ENCODE measurements at regions of chr5 and their contacts with region 1.

Region 1: GRCh38 chr5:143182901-143183820 is 220.3 kb downstream of the NR3C1 start:
- DNase-seq: peak; percentile 84
- ATAC-seq: peak; percentile 82
- H3K4me3 ChIP-seq: peak overlapping the region; percentile 32; the same call in 1 of the 2 replicates
- H3K27ac ChIP-seq: peak overlapping the region; percentile 90
- H3K4me1 ChIP-seq: peaks cover 53% of the 10 kb centered on the region
- H3K27me3 ChIP-seq: no peaks in the 10 kb centered on the region
- CTCF ChIP-seq: peak in 2 of 3 experiments; percentile 4 to 12; a peak in 1 of 6 replicates
- EP300 ChIP-seq: peak; percentile 78 to 79
- POLR2A ChIP-seq: peak; percentile 46
- RAD21 ChIP-seq: 0 out of 2 replicates have a peak, but pooled peaks have one; percentile 32

Region 2: DNA sequence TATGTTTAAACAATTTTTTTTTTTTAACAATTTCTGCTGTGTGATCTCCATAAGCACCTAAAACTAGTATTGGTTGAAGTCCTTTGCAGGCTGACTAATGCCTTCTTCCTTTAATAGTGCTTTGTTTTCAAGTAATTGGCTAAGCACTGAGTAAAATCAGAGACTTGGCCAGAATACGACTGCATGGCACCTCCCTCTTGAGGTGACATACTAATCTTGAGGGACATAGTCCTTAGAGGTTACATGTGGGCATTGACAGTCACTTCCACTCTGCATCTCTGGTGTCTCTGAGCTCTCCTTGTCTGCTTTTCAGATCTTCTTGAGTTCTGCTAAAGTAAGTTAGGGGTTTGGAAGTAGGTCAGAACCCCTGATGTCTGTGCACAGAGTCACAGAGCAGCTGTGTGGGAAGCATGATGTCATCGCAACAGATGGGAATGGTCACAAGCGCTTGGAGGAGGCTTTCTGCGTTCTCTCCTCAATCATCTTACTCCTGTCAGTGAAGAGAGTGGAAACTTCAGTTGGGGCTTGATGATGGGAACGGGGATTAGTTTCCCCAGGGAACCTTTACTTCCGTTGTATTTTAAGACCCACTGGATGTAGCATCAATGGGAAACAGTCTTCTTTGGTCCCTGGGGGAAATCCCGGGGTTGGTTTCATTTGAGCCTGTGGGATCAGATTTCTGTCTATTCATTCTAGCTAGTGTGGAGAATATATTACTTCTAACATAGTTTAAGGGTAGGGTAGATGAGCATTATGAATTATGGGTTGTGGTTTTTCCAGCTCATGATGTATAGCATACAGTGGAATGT is 276.1 kb before region 1 on chr5:
- CTCF ChIA-PET with region 1: no interaction called
- POLR2A ChIA-PET with region 1: no interaction called
- RAD21 ChIA-PET with region 1: no interaction called
- SMC1A ChIA-PET with region 1: no interaction called
- in situ Hi-C with region 1: no loop called
- intact Hi-C with region 1: no loop called
- DNase-seq: no peak
- ATAC-seq: no peak
- H3K4me3 ChIP-seq: no peak overlapping the region
- H3K27ac ChIP-seq: no peak overlapping the region
- H3K4me1 ChIP-seq: no peaks in the 10 kb centered on the region
- H3K27me3 ChIP-seq: no peaks in the 10 kb centered on the region
- CTCF ChIP-seq: no peak
- EP300 ChIP-seq: no peak
- POLR2A ChIP-seq: no peak
- RAD21 ChIP-seq: no peak

Region 3: GRCh38 chr5:143016777-143017516 is 166.2 kb before region 1 on chr5:
- CTCF ChIA-PET with region 1: interaction called, 5 read pairs
- POLR2A ChIA-PET with region 1: interaction called, 10 read pairs
- RAD21 ChIA-PET with region 1: interaction called, 17 read pairs
- SMC1A ChIA-PET with region 1: interaction called, 17 read pairs
- in situ Hi-C with region 1: no loop called
- intact Hi-C with region 1: no loop called
- DNase-seq: no peak
- ATAC-seq: peak; percentile 28
- H3K4me3 ChIP-seq: no peak overlapping the region
- H3K27ac ChIP-seq: no peak overlapping the region
- H3K4me1 ChIP-seq: peaks cover 32% of the 10 kb centered on the region
- H3K27me3 ChIP-seq: no peaks in the 10 kb centered on the region
- CTCF ChIP-seq: peak; percentile 68 to 75 (median 72)
- EP300 ChIP-seq: peak in 1 of 2 experiments; percentile 8; a peak in 1 of 4 replicates
- POLR2A ChIP-seq: no peak
- RAD21 ChIP-seq: peak; percentile 88

Region 4: DNA sequence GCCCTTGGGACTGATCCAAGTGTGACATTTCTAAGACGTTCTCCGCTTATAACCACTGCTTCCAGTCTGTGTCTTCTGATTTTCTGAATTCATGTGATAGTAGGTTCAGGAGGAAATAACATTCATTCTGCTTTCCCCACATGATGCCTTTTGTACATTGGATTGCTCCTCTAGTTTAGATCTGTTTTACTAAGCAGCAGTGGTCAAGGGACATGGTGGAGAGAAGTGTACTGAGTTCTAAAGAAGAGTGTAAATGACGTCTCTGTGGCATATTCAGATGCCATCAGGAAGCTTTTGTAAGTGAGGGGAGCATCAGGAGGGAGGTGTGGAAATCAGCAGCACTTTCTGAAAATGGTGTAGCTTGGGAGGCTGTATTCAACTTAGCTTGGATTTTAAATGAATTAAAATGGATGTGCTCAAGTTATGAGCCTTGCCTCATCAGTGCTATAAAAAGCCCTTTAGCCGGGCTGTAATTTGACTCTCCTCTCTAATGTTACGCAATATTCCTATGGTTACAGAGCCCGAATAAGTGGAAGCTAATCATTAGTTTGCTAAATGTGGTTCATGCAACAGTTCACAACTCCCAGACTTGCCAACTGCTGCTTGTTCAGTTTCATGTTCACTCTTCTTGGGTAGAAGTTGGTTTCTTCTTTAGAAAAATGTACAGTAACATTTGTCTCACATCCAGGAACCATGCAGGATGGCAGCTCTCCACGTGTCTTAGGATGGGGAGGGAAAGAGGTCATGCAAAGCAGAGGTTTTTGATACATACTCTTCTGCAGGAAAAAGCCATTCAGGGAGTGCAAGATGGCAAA is 131.7 kb before region 1 on chr5:
- CTCF ChIA-PET with region 1: interaction called, 3 read pairs
- POLR2A ChIA-PET with region 1: interaction called, 6 read pairs
- RAD21 ChIA-PET with region 1: interaction called, 15 read pairs
- SMC1A ChIA-PET with region 1: interaction called, 104 read pairs
- in situ Hi-C with region 1: no loop called
- intact Hi-C with region 1: no loop called
- DNase-seq: no peak
- ATAC-seq: peak; percentile 10
- H3K4me3 ChIP-seq: no peak overlapping the region
- H3K27ac ChIP-seq: no peak overlapping the region; the same call in 1 of the 2 replicates
- H3K4me1 ChIP-seq: peaks cover 38% of the 10 kb centered on the region
- H3K27me3 ChIP-seq: no peaks in the 10 kb centered on the region
- CTCF ChIP-seq: no peak
- EP300 ChIP-seq: no peak
- POLR2A ChIP-seq: no peak
- RAD21 ChIP-seq: no peak

Region 5: DNA sequence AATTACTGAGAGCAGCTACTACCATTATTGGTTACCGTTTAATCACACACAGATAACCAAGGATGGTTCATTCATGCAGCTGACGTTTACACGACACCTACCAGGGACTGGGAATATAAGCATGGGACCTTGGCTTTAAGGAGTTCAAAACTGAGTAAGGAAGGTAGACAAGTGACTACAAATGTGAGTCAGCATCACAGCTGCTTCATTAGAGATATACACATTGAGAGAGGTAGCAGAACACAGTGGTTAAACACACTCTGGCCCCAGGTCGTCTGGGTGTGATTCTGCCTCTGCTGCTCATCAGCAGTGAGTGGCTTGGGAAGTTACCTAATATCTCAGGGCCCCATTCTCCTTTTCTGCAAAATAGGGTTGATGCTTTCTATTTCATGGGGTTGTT is 48.3 kb before region 1 on chr5:
- CTCF ChIA-PET with region 1: interaction called, 5 read pairs
- POLR2A ChIA-PET with region 1: no interaction called
- RAD21 ChIA-PET with region 1: interaction called, 3 read pairs
- SMC1A ChIA-PET with region 1: interaction called, 10 read pairs
- in situ Hi-C with region 1: no loop called
- intact Hi-C with region 1: no loop called
- DNase-seq: no peak
- ATAC-seq: peak; percentile 83
- H3K4me3 ChIP-seq: no peak overlapping the region
- H3K27ac ChIP-seq: no peak overlapping the region
- H3K4me1 ChIP-seq: no peaks in the 10 kb centered on the region
- H3K27me3 ChIP-seq: no peaks in the 10 kb centered on the region
- CTCF ChIP-seq: no peak
- EP300 ChIP-seq: no peak
- POLR2A ChIP-seq: no peak
- RAD21 ChIP-seq: no peak

Region 6: DNA sequence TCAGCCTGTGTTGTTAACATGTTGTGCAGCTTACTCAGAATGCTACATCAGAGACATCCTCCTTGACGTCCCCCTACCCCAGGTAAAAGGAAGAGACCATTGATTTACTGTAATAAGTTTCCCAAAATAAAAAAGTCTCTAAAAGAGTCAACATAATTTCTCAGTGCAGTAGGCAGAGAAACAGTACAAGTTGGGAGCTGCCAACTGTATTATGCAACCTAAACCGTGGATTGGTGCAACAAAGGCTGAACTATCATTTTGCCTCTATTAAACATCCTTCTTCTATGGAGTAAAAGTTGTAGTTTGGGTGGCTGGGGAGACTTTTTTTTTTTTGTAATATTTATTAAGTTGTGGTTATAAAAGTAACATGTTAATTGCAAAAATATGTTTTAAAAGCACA is 12.3 kb after region 1 on chr5:
- CTCF ChIA-PET with region 1: interaction called, 22 read pairs
- POLR2A ChIA-PET with region 1: interaction called, 23 read pairs
- RAD21 ChIA-PET with region 1: interaction called, 13 read pairs
- SMC1A ChIA-PET with region 1: interaction called, 93 read pairs
- in situ Hi-C with region 1: no loop called
- intact Hi-C with region 1: no loop called
- DNase-seq: no peak
- ATAC-seq: no peak
- H3K4me3 ChIP-seq: no peak overlapping the region
- H3K27ac ChIP-seq: no peak overlapping the region
- H3K4me1 ChIP-seq: no peaks in the 10 kb centered on the region
- H3K27me3 ChIP-seq: no peaks in the 10 kb centered on the region
- CTCF ChIP-seq: no peak
- EP300 ChIP-seq: no peak
- POLR2A ChIP-seq: no peak
- RAD21 ChIP-seq: no peak

Region 7: DNA sequence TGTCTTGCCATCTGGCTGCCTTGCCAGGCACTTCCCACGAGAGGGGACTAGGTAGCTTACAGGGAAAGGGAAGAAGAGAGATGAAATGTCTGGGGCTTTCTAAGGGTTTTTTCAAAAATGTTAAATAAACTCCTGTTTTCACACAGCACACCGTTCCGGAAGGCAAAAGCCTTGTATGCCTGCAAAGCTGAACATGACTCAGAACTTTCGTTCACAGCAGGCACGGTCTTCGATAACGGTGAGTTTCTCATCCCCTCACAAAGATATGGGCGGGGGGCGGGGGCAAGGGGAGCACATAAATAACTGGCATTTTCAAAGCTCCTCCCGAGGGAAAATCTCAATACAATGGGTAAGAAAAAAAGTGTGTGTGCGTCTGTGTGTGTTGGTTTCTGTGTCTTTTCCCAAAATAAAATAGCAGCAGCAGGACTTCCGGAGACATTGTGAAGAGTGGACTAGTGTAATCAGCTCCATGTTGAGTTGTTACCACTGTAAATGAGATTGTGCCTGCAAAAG is 30.7 kb after region 1 on chr5:
- CTCF ChIA-PET with region 1: interaction called, 82 read pairs
- POLR2A ChIA-PET with region 1: interaction called, 60 read pairs
- RAD21 ChIA-PET with region 1: interaction called, 227 read pairs
- SMC1A ChIA-PET with region 1: interaction called, 193 read pairs
- in situ Hi-C with region 1: no loop called
- intact Hi-C with region 1: no loop called
- DNase-seq: peak; percentile 97
- ATAC-seq: peak; percentile 68
- H3K4me3 ChIP-seq: peak overlapping the region; percentile 6; the same call in 1 of the 2 replicates
- H3K27ac ChIP-seq: peak overlapping the region; percentile 100
- H3K4me1 ChIP-seq: peaks cover 76% of the 10 kb centered on the region
- H3K27me3 ChIP-seq: no peaks in the 10 kb centered on the region
- CTCF ChIP-seq: peak; percentile 38 to 61 (median 47); a peak in 5 of 6 replicates
- EP300 ChIP-seq: peak; percentile 73 to 82
- POLR2A ChIP-seq: peak; percentile 45
- RAD21 ChIP-seq: peak; percentile 76

Measured in GM12878 (cell line).